ENCODE measurements at regions of chr10 and their contacts with region 1.

Region 1: GRCh38 chr10:128150045-128150493 is 23.8 kb upstream of the MKI67 start:
- DNase-seq: peak; percentile 40 to 59
- ATAC-seq: peak; percentile 90 to 97 (median 96)
- H3K4me3 ChIP-seq: peak overlapping the region; percentile 21 to 63 (median 44)
- H3K27ac ChIP-seq: peak overlapping the region in 1 of 10 donors; percentile 31
- H3K4me1 ChIP-seq: peaks cover 0 to 11% (median 5%) of the 10 kb centered on the region in 9 donors
- H3K27me3 ChIP-seq: peaks cover 0 to 54% (median 36%) of the 10 kb centered on the region in 7 donors
- CTCF ChIP-seq: peak; percentile 54 to 87 (median 78)

Region 2: DNA sequence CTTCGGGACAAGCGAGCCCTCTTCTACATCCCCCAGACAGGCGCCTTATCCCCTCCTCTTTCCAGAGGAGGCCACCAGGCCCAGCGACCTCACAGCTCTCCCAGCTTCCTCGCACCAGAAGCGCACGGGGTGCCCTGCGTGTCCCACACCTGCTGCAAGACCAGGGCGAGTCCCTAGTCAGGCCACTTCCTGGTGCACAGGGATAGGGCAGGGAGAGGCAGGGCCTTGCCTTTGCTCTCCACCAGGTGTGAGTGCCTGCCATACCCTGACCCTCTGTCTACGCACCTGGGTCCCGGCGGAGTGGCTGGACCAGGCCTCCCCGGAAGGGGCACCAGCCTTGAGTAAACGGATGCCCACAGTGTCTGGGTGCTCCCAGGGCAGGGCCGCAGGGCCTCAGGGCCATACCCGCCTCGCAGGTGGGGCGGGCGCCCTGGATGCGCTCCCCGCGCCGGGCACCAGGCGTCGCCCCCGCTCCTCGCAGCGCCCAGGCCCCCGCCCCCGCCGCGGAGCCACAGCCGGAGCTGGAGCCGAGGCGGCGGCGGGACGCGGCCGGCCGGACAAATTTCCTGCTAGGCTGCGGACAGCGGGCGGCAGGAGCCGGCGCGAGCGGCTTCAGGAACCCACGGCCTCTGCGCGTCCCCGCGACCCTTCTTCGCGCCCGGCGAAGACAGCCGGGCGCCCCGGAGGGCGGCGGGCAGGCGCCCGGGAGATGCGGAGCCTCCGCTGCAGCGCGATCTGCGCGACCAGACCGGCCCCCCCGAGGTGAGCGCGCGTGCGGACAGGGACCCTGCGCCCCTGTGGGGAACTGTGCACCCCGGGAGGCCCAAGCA is 243.3 kb before region 1 on chr10 and contains the start of gene PTPRE:
- intact Hi-C with region 1: loop called in 1 of 10 experiments (anchors 10 kb)
- DNase-seq: peak; percentile 70 to 83
- ATAC-seq: peak; percentile 76 to 92 (median 88)
- H3K4me3 ChIP-seq: peak within 1 kb of the TSS; percentile 66 to 92 (median 76)
- H3K27ac ChIP-seq: peak within 1 kb of the TSS; percentile 76 to 96 (median 90)
- H3K4me1 ChIP-seq: peaks cover 2 to 48% (median 33%) of the 10 kb centered on the region in 9 donors
- H3K27me3 ChIP-seq: peaks cover 0 to 6% (median 0%) of the 10 kb centered on the region in 7 donors
- CTCF ChIP-seq: peak; percentile 62 to 98 (median 81)
- total RNA-seq, gene PTPRE: 17.1 to 42.8 (median 23.0) TPM

Region 3: DNA sequence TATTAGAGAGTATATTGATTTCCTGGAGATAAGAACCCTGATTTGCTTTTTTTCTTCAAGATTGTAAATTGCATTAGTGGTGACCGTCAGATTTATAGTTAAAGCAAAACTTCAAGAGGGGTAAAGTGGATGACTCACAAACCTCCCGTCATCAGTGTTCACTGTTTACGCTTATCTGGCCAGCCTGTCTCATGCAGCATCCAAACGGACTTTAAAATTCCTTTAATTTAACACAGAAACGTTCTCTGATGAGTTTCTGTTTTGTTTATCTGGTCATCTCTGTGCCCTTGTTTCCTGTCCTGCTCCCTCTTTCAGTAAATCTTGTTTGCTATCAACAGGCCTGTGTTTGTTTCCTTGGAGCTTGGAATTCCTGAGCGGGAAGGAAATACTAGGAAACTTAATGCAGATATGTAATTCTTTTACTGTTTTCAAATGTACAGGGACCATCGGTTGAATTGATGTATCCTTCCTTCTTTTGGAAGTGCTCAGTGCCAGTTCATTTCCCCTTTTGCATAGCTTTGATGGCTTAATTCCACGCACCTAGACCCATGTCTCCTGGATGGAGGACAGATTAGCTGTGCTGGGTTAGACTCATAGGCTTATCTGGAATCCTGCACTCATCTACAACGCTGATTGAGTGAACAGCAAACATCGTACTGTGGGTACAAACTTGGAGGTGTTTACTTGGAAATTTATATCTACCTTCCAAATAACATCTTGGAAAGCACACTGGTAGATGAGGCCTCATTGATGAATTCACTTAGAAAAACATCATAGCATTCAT is 221.9 kb before region 1 on chr10:
- intact Hi-C with region 1: no loop called
- DNase-seq: no peak
- ATAC-seq: no peak
- H3K4me3 ChIP-seq: no peak overlapping the region
- H3K27ac ChIP-seq: peak overlapping the region in 5 of 10 donors; percentile 2 to 40 (median 25)
- H3K4me1 ChIP-seq: peaks cover 0 to 56% (median 36%) of the 10 kb centered on the region in 9 donors
- H3K27me3 ChIP-seq: no peaks in the 10 kb centered on the region
- CTCF ChIP-seq: no peak

Region 4: DNA sequence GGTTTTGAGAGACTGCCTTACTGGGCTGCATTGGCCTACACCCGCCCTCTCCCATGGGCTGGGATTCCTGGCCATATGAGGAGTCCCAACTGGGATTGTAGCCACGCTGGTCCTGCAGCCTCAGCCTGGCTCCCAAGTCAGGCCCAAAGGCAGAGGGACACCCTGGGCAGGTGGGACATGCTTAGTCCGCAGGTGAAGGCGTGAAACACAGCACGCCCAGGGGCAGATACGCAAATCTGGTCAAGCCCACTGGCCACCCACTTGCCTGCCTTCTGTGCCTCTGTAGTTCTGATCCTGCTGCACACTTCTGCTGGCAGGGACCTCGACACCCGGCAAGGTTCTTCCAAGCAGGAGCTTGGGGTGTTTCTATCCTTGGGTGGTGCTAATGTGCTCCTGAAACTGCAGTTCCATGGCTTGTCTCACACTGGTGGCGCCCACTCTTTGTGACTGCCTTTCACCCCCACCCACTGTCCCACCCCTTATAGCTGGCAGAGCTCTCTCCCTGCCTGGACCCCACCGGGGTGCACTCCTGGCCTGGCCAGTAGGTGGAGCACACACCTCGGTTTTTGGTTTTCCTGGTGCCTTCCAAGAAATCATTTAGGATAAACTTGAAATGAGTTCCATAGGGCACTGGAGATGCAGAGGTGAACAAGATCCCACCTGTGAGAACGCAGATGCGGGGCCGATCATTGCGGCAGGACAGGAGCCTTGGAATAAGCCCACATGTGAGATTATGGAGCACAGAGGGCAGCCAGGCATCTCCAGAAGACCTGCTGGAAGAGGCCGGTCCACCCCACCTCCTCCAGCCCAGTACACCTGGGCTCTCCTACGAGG is 71.7 kb before region 1 on chr10:
- intact Hi-C with region 1: loop called in 6 of 10 experiments (anchors 2 to 5 kb)
- DNase-seq: no peak
- ATAC-seq: peak in 6 of 8 donors; percentile 42 to 69 (median 62)
- H3K4me3 ChIP-seq: no peak overlapping the region
- H3K27ac ChIP-seq: no peak overlapping the region
- H3K4me1 ChIP-seq: no peaks in the 10 kb centered on the region
- H3K27me3 ChIP-seq: no peaks in the 10 kb centered on the region
- CTCF ChIP-seq: peak in 8 of 9 donors; percentile 35 to 68 (median 63)

Region 5: DNA sequence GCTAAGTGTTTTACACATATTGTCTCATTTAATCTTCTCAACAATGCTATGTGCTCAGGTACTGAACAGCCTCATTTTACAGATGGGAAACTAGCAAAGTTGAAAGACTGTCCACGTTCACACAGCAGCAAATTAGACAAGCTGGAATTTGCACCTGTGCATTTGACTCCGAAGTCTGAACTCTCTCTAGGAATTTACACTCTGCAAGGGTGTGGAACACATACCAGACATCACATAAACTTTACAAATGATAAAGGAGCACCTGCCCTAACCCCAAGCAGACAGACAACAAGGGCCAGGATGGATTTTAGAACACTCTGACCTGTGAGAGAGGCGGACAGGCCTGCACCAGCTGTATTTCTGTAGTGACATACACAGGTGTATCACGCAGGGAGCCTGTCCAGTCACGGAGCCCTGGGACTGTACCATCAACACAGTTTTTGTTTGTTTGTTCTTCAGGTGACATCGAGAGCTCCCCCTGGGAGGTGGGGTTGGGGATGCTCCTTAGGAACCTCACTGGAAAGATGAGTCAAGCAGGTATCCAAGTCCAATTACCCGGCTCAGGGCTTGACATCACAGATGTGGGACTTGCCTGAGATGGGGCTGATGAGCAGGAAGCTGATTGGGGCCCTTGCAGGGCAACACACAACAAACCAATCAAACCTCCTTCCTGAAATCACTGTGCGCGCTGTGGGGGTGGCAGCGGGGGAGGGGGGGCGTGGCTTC is 54.9 kb before region 1 on chr10:
- intact Hi-C with region 1: no loop called
- DNase-seq: no peak
- ATAC-seq: peak in 1 of 8 donors; percentile 25
- H3K4me3 ChIP-seq: no peak overlapping the region
- H3K27ac ChIP-seq: no peak overlapping the region
- H3K4me1 ChIP-seq: no peaks in the 10 kb centered on the region
- H3K27me3 ChIP-seq: peaks cover 0 to 22% (median 7%) of the 10 kb centered on the region in 7 donors
- CTCF ChIP-seq: no peak

Region 6: DNA sequence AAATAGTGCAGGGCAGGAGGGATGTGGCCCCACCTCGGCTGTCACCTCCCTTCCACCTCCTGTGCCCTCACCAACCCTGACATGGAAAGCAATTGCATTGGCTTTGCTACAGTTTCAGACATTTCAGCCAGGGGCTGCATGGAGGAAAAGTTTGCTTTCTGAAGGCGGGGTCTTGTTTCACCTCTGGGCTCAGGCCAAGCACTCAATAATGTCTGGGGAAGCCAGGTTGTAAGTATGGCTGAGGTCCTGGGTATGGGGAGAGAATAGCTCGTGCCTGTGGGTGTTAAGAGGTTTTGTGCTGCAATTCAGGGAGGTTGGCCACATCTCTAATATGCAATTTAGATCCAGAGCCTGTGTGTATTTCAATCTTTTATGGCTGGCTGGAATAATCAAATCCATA is 214.6 kb after region 1 on chr10:
- intact Hi-C with region 1: no loop called
- DNase-seq: no peak
- ATAC-seq: no peak
- H3K4me3 ChIP-seq: no peak overlapping the region
- H3K27ac ChIP-seq: no peak overlapping the region
- H3K4me1 ChIP-seq: no peaks in the 10 kb centered on the region
- H3K27me3 ChIP-seq: peaks cover 0 to 36% (median 12%) of the 10 kb centered on the region in 7 donors
- CTCF ChIP-seq: no peak